ENCODE measurements at regions of chr17 and their contacts with region 1.

Region 1: DNA sequence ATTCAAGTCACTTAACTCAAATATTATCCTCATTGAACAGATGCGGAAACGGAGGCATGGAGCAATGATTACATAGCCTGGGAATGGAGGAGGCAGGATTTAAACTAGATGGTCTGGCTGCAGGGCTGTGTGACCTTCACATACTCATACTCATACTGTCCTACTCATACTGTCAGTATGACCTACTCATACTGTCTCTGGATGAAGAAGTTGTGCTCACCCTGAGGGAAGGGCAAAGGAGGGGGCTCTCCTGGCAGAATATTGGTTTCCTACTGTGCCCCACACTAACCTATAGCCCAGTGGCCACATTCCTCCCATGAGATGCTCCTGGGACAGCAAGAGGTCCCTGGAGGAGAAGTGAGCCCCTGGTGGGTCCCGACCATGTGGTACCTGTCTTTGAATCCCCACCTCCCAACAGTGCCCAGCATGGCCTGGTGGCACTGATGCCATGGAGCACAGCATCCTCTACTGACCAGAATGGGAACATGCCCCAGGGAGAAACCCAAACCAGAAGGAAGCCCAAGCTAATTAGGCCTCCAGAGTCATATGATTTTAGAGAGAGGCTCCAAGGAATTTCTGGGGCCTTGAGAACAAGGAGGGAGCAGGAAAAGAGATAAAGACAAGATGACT is 197.3 kb upstream of the SDK2 start:
- DNase-seq: peak in 8 of 14 experiments; percentile 11 to 49 (median 29)
- ATAC-seq: peak; percentile 73
- H3K4me3 ChIP-seq: no peak overlapping the region
- H3K4me3 Mint-ChIP-seq: no peak overlapping the region
- H3K27ac ChIP-seq: no peak overlapping the region
- H3K27ac Mint-ChIP-seq: no peak overlapping the region
- H3K4me1 ChIP-seq: peaks cover 4% of the 10 kb centered on the region
- H3K4me1 Mint-ChIP-seq: peaks cover 26% of the 10 kb centered on the region
- H3K27me3 ChIP-seq: no peaks in the 10 kb centered on the region
- H3K27me3 Mint-ChIP-seq: no peaks in the 10 kb centered on the region
- CTCF ChIP-seq: peak; percentile 71

Region 2: GRCh38 chr17:73595479-73595878 is 246.1 kb before region 1 on chr17:
- CTCF ChIA-PET with region 1: no interaction called
- POLR2A ChIA-PET with region 1: no interaction called
- intact Hi-C with region 1: loop called in 1 of 2 experiments (anchors 5 kb)
- DNase-seq: peak in 8 of 14 experiments; percentile 12 to 30 (median 25)
- ATAC-seq: no peak
- H3K4me3 ChIP-seq: no peak overlapping the region
- H3K4me3 Mint-ChIP-seq: no peak overlapping the region
- H3K27ac ChIP-seq: peak overlapping the region in 1 of 2 donors; percentile 10
- H3K27ac Mint-ChIP-seq: peak overlapping the region; percentile 90
- H3K4me1 ChIP-seq: peaks cover 61% of the 10 kb centered on the region
- H3K4me1 Mint-ChIP-seq: peaks cover 67% of the 10 kb centered on the region
- H3K27me3 ChIP-seq: no peaks in the 10 kb centered on the region
- H3K27me3 Mint-ChIP-seq: no peaks in the 10 kb centered on the region
- CTCF ChIP-seq: peak; percentile 24

Region 3: DNA sequence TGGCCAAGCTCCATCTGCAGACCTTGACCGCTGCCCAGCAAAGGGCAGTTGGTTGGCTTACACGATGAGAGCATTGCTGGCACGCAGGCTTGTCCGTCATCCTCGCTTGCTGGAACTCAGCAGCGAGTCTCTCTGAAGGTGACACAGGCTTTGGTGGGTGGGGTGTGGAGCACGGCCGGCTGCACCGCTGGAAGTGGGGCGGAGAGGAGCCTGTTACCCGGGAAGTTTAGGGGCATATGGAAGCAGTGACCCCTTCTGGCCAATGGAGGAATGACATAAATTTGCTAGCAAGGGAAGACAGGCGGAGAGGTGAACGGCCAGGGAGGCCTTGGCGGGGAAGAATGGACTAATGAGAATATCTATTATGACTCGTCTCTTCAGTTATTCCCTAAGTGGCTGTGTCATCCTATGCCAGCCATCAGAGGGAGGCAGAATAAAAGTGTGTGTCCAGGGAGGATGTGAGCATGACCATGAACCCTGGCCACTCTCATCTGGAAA is 131.4 kb before region 1 on chr17:
- CTCF ChIA-PET with region 1: no interaction called
- POLR2A ChIA-PET with region 1: interaction called, 3 read pairs
- intact Hi-C with region 1: loop called in 1 of 2 experiments (anchors 5 kb)
- DNase-seq: peak; percentile 38 to 84 (median 60)
- ATAC-seq: peak; percentile 79
- H3K4me3 ChIP-seq: no peak overlapping the region
- H3K4me3 Mint-ChIP-seq: no peak overlapping the region
- H3K27ac ChIP-seq: no peak overlapping the region
- H3K27ac Mint-ChIP-seq: peak overlapping the region; percentile 4
- H3K4me1 ChIP-seq: peaks cover 15% of the 10 kb centered on the region
- H3K4me1 Mint-ChIP-seq: peaks cover 17% of the 10 kb centered on the region
- H3K27me3 ChIP-seq: no peaks in the 10 kb centered on the region
- H3K27me3 Mint-ChIP-seq: no peaks in the 10 kb centered on the region
- CTCF ChIP-seq: peak; percentile 91

Region 4: DNA sequence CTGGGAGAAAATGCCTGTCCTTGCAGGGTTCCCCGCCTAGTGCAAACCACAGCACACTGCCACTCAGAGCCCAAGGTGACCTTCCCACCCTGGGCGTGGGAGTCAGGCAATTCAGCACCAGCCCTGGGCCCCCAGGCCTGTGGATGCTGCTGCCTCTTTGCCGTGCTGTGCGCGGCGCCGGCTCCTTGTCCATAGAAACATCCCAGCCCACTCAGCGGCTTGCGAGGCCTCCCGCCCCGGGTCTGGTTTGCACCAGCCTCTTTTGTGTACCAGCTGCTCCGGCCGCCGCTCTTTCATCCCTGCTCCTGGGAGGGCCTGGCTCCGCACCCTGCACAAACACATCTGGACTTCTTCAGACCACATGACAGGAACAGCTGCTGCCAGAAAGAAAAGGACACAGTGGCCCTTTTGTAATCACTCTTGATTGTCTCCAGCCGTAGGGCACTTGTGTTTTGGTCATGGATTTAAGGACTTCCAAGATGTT is 121.9 kb before region 1 on chr17:
- CTCF ChIA-PET with region 1: no interaction called
- POLR2A ChIA-PET with region 1: interaction called, 8 read pairs
- intact Hi-C with region 1: loop called (anchors 5 kb)
- DNase-seq: no peak
- ATAC-seq: no peak
- H3K4me3 ChIP-seq: no peak overlapping the region
- H3K4me3 Mint-ChIP-seq: peak overlapping the region; percentile 46
- H3K27ac ChIP-seq: peak overlapping the region in 1 of 2 donors; percentile 40
- H3K27ac Mint-ChIP-seq: peak overlapping the region; percentile 97
- H3K4me1 ChIP-seq: peaks cover 41% of the 10 kb centered on the region
- H3K4me1 Mint-ChIP-seq: peaks cover 60% of the 10 kb centered on the region
- H3K27me3 ChIP-seq: no peaks in the 10 kb centered on the region
- H3K27me3 Mint-ChIP-seq: no peaks in the 10 kb centered on the region
- CTCF ChIP-seq: no peak

Region 5: DNA sequence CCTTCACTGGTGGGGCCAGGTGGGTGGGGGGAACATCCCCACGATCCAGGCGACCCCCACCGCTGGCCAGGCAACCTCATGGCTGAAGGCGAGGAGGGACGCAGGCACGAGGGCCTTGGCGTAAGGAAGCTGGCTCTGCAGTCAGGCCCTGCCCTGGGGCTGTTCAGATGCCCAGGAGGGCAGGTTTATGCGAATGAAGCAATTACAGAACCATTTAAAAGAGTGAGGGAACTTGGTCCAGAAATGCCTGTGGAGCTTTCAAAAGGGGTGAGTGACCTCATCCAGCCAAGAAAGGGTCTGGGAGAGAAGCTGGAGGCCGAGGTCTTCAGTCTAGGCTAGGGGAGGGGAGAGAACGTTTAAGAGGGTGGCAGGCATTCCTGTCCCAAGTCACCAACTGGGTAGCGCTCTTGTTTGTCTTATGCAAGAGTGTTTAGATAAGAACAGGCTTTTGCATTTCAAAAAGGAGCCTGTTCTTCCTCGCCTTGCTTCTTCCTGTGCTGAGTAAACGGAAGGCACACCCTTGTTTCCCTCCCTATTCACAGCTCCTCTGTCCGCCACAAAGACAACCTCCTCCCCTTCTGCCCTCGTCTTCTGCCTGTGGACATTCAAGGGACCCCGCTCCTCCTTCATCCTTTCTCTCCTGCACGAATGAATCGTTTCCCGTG is 13.8 kb before region 1 on chr17:
- CTCF ChIA-PET with region 1: no interaction called
- POLR2A ChIA-PET with region 1: interaction called, 13 read pairs
- intact Hi-C with region 1: loop called in 1 of 2 experiments (anchors 2 kb)
- DNase-seq: peak in 12 of 14 experiments; percentile 6 to 49 (median 19)
- ATAC-seq: peak; percentile 86
- H3K4me3 ChIP-seq: peak overlapping the region; percentile 8
- H3K4me3 Mint-ChIP-seq: peak overlapping the region; percentile 77
- H3K27ac ChIP-seq: peak overlapping the region; percentile 48 to 83
- H3K27ac Mint-ChIP-seq: peak overlapping the region; percentile 97
- H3K4me1 ChIP-seq: peaks cover 85% of the 10 kb centered on the region
- H3K4me1 Mint-ChIP-seq: peaks cover 95% of the 10 kb centered on the region
- H3K27me3 ChIP-seq: no peaks in the 10 kb centered on the region
- H3K27me3 Mint-ChIP-seq: no peaks in the 10 kb centered on the region
- CTCF ChIP-seq: no peak

Region 6: DNA sequence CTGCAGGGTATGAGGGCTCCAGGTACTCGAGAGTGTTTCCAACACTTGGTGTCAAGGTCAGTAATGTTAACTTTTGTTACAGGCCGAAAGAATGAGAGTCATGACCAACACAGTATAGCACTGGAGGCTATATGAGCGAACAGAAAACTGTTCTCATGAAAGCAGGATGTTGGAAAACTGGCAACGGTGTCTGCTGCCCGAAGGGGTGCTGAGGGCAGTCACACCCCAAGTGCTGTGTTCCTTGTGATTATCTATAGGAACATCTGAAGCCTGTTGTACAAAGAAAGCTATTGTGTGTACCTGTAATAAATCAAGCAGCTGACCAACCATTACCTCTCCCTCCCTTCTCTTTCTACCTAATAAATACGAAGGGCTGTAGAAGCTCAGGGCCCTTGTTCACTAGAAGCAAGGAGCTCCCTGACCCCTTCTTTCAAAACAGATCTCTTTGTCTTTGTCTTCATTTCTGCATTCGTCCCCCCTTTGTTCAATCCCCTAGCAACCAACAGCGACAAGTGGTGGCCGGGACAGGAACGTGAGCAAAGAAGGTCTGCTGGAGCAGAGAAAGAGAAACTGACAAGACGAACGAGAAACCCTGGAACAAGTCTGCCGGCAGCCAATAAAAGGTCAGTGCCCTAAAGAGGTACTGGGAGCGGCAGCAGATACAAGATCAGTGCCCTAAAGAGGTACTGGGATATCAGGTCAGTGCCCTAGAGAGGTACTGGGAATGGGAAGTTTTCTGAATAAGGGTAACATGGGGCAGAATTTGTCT is 742.9 kb after region 1 on chr17:
- CTCF ChIA-PET with region 1: no interaction called
- POLR2A ChIA-PET with region 1: no interaction called
- intact Hi-C with region 1: no loop called
- DNase-seq: no peak
- ATAC-seq: no peak
- H3K4me3 ChIP-seq: no peak overlapping the region
- H3K4me3 Mint-ChIP-seq: no peak overlapping the region
- H3K27ac ChIP-seq: no peak overlapping the region
- H3K27ac Mint-ChIP-seq: no peak overlapping the region
- H3K4me1 ChIP-seq: peaks cover 10% of the 10 kb centered on the region
- H3K4me1 Mint-ChIP-seq: peaks cover 13% of the 10 kb centered on the region
- H3K27me3 ChIP-seq: peaks cover 0 to 2% of the 10 kb centered on the region in 2 experiments
- H3K27me3 Mint-ChIP-seq: no peaks in the 10 kb centered on the region
- CTCF ChIP-seq: no peak

Measured in CD4-positive, alpha-beta T cell (primary cell).